Activated naive CD4-positive, alpha-beta T cell treated with anti-CD3 and anti-CD28 coated beads for 36 hours (primary cell): ENCODE measurements at regions of chr7 and their contacts with region 1.

Region 1: DNA sequence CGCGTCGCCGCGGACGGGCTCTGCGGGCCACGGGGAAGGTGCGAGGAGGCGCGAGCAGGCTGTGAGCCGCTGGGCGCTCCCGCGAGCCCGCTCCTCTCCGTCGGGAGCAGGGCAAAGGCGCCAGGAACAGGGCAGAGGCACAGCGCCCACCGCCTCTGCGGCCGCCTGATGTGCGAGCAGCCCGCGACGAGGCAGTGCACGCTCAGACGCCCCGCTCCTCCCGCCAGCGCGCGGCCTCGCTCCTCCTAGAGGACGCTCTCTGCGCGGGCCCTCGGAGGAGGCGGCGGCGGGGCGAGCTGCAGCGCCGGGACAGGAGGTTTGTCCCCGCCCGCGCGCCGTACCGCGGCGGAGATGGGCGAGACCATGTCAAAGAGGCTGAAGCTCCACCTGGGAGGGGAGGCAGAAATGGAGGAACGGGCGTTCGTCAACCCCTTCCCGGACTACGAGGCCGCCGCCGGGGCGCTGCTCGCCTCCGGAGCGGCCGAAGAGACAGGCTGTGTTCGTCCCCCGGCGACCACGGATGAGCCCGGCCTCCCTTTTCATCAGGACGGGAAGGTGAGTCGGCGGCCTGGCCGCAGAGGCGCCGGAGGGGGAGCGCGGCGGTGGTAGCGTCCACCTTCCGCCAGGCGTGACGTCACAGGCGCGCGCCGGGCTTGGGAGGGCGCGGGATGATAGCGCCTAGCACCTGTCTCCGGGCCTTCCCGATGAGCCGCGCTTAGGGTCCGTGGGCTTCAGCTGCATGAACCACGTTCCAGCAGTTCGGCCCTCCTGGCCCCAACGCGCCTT is 731 bp downstream of the LANCL2 start:
- DNase-seq: peak; percentile 93
- H3K4me3 Mint-ChIP-seq: peak overlapping the region; percentile 92
- H3K27ac Mint-ChIP-seq: peak overlapping the region; percentile 96
- H3K4me1 Mint-ChIP-seq: peaks cover 8% of the 10 kb centered on the region
- H3K27me3 Mint-ChIP-seq: no peaks in the 10 kb centered on the region

Region 2: DNA sequence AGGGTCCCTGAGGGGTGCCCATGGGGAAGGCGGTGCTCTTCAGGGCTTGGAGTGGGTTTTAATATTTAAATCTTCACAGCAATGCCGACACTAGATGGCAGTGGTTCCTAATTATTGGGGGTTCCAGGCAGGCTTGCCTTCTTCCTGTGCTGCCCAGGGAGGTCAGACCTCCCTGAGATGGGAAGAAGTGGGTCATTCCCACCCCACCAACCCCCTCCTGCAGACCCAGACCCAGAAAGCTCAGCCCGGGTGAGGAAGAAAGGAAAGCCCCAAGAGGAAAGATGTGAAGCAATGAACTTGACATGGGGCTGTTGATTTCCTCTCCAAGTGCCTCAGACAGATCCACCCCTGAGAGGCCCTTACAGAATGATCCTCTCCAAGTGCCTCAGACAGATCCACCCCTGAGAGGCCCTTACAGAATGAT is 85.8 kb before region 1 on chr7:
- CTCF ChIA-PET with region 1: no interaction called
- intact Hi-C with region 1: loop called (anchors 2 kb)
- DNase-seq: peak; percentile 80
- H3K4me3 Mint-ChIP-seq: no peak overlapping the region
- H3K27ac Mint-ChIP-seq: no peak overlapping the region
- H3K4me1 Mint-ChIP-seq: no peaks in the 10 kb centered on the region
- H3K27me3 Mint-ChIP-seq: no peaks in the 10 kb centered on the region

Region 3: GRCh38 chr7:55469271-55469681 is 103.4 kb after region 1 on chr7:
- CTCF ChIA-PET with region 1: no interaction called
- intact Hi-C with region 1: loop called (anchors 5 kb)
- DNase-seq: peak; percentile 53
- H3K4me3 Mint-ChIP-seq: no peak overlapping the region
- H3K27ac Mint-ChIP-seq: peak overlapping the region; percentile 83
- H3K4me1 Mint-ChIP-seq: peaks cover 72% of the 10 kb centered on the region
- H3K27me3 Mint-ChIP-seq: no peaks in the 10 kb centered on the region

Region 4: GRCh38 chr7:55572378-55573233 is 206.7 kb after region 1 on chr7 and contains the start of gene VOPP1:
- CTCF ChIA-PET with region 1: no interaction called
- intact Hi-C with region 1: loop called (anchors 1 kb)
- DNase-seq: peak; percentile 53
- H3K4me3 Mint-ChIP-seq: peak within 1 kb of the TSS; percentile 91
- H3K27ac Mint-ChIP-seq: peak within 1 kb of the TSS; percentile 97
- H3K4me1 Mint-ChIP-seq: peaks cover 63% of the 10 kb centered on the region
- H3K27me3 Mint-ChIP-seq: no peaks in the 10 kb centered on the region
- total RNA-seq, gene VOPP1: 100 to 102 TPM

Region 5: DNA sequence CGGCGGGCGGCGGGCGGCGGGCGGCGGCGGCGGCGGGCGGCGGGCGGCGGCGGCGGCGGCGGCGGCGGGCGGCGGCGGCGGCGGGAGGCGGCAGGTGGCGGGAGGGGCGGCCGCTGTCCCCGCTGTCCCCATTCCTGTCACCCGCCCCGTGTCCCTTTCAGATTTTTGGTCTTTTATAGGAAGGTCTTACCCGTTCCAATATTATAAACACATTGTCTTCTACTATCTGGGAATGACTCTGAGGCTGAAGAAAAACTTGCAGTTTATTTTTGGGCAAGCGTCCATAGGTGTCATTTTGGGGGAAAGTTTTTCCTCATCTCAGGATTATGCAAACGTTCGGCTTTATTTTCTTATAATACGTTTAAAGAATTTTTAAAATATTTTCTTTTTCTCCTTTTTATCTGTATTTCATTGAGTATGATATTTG is 522.0 kb after region 1 on chr7:
- CTCF ChIA-PET with region 1: no interaction called
- intact Hi-C with region 1: loop called (anchors 2 kb)
- DNase-seq: no peak
- H3K4me3 Mint-ChIP-seq: peak overlapping the region; percentile 72
- H3K27ac Mint-ChIP-seq: peak overlapping the region; percentile 59
- H3K4me1 Mint-ChIP-seq: peaks cover 5% of the 10 kb centered on the region
- H3K27me3 Mint-ChIP-seq: no peaks in the 10 kb centered on the region

Region 6: DNA sequence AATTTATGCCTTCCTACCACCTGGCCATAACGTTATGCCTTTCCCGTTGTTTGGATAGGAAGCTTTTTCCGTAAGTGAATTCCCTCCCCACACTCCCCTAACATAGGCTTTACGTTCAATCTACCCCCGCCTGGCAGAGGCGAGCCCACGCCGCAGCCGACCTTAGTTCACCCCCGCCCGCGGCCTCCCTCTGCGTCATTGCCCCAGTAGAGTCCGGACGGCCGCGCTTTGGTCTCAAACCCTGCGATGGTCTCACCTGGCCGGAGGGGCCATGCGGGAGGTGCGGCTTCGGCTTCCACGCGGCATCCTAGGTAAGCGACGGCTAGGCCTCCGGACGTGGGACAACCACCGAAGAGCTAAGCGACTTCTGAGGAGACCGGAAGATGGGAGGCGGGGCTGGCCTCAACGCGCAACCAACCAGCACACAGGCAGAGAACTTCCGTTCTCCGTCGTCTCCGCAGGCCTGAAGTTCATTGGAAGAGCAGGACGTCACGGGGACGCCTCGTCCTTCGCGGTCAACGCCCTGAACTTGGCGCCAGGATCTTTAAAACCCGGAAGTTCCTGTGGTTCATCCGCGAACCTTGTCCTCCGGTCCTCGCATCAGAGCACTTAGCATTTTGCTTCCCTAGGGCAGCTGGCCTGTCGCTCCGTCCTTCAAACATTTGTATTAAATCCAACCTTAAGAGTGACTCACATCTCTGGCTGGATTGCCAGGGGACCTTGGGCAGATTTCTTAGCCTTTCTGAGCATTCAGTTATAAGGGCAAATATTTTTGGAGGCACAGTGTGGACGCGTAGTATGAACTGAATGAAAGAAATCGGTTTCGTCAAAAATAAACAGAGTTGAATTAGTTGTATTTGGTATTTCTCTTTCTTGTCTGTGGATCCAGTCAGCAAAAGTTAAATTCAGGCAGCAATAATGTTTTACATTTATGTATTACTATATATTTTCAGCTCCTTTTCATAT is 740.5 kb after region 1 on chr7 and contains the start of gene CHCHD2:
- CTCF ChIA-PET with region 1: no interaction called
- intact Hi-C with region 1: loop called (anchors 1 kb)
- DNase-seq: peak; percentile 97
- H3K4me3 Mint-ChIP-seq: peak within 1 kb of the TSS; percentile 90
- H3K27ac Mint-ChIP-seq: peak within 1 kb of the TSS; percentile 98
- H3K4me1 Mint-ChIP-seq: peaks cover 31% of the 10 kb centered on the region
- H3K27me3 Mint-ChIP-seq: no peaks in the 10 kb centered on the region
- total RNA-seq, gene CHCHD2: 793 TPM